GM12878 (cell line): ENCODE measurements at regions of chrX and their contacts with region 1.

Region 1: DNA sequence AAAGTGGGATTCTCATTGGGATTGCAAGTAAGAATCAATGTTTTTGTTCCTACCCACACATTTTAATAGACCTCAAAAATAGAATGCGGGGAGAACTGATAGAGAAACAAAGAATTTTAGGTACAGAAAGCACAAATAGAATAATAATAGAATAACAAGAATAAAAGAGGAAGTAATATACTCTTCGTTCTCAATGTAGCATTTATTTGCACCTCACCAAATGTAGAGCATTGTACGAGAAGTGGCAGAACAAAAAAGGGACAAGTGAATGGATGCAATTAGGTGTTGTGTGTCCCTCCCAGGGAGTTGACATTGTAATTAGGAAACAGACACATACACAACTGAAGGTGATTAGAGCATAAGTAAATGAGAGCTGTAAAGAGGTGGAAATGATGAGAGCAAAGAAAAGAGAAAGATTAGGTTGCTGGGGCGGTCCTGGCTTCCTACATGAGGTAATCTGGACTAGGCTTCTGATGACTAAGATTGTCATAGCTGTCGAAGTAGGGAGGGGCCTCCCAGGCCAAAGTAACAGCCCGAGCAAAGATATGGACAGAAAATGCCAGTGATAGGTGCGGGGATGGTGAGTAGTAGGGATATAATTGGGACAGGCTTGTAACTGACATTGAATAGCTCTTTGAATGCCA is 10.4 kb downstream of the RAB9A start:
- DNase-seq: no peak
- ATAC-seq: peak; percentile 53
- H3K4me3 ChIP-seq: peak overlapping the region; percentile 37; the same call in 1 of the 2 replicates
- H3K27ac ChIP-seq: peak overlapping the region; percentile 69
- H3K4me1 ChIP-seq: peaks cover 38% of the 10 kb centered on the region
- H3K27me3 ChIP-seq: no peaks in the 10 kb centered on the region
- CTCF ChIP-seq: no peak
- EP300 ChIP-seq: no peak
- POLR2A ChIP-seq: no peak
- RAD21 ChIP-seq: no peak

Region 2: GRCh38 chrX:13658602-13659001 is 40.7 kb before region 1 on chrX:
- CTCF ChIA-PET with region 1: interaction called, 21 read pairs
- POLR2A ChIA-PET with region 1: interaction called, 9 read pairs
- RAD21 ChIA-PET with region 1: interaction called, 25 read pairs
- SMC1A ChIA-PET with region 1: interaction called, 115 read pairs
- in situ Hi-C with region 1: no loop called
- intact Hi-C with region 1: no loop called
- DNase-seq: no peak
- ATAC-seq: peak; percentile 66
- H3K4me3 ChIP-seq: no peak overlapping the region
- H3K27ac ChIP-seq: peak overlapping the region; percentile 73
- H3K4me1 ChIP-seq: peaks cover 14% of the 10 kb centered on the region
- H3K27me3 ChIP-seq: no peaks in the 10 kb centered on the region
- CTCF ChIP-seq: peak; percentile 59 to 72 (median 68)
- EP300 ChIP-seq: no peak
- POLR2A ChIP-seq: no peak
- RAD21 ChIP-seq: peak; percentile 93

Region 3: DNA sequence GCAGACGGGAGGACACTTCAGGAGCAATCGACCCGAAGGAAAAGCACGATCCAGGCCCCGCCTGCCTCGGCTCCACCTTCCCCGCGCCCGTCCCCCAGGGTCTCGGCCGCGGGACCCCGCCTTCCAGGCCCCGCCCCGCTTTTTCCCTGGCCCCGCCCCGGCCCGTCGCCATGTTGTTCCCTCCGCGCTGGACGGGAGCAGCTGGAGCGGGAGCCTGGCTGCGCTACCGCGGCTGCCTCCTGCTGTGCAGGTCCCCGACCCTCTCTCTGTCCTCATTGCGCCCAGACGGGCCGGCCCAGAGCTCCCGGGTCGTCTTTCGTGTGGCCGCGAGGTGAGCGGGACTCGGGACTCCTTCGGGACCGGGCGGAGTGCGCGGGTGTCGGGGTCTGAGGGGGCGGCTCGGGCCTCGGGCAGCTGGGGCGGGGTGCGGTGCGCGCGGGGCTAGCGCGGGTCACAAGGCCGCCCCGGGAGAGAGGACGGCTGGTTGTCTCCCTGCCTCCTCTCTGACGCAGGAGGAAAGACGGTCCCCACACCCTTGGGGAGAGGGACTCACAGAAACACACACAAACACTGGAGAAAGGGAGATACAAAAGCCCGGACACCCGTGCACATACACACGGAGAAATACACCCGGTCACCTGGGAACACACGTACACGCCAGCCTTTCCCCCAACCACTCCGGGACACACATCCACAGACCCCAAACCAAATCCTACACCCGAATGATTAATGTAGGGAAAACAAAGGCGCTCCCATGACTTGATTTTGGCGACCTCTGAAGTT is 10.2 kb before region 1 on chrX and contains the start of gene RAB9A:
- CTCF ChIA-PET with region 1: interaction called, 15 read pairs
- POLR2A ChIA-PET with region 1: interaction called, 45 read pairs
- RAD21 ChIA-PET with region 1: interaction called, 42 read pairs
- SMC1A ChIA-PET with region 1: interaction called, 72 read pairs
- in situ Hi-C with region 1: no loop called
- intact Hi-C with region 1: no loop called
- DNase-seq: no peak
- ATAC-seq: peak; percentile 77
- H3K4me3 ChIP-seq: peak within 1 kb of the TSS; percentile 84
- H3K27ac ChIP-seq: peak within 1 kb of the TSS; percentile 91
- H3K4me1 ChIP-seq: peaks cover 16% of the 10 kb centered on the region
- H3K27me3 ChIP-seq: no peaks in the 10 kb centered on the region
- CTCF ChIP-seq: no peak
- EP300 ChIP-seq: peak in 1 of 2 experiments; percentile 18; a peak in 1 of 4 replicates
- POLR2A ChIP-seq: peak; percentile 86
- RAD21 ChIP-seq: no peak
- polyA plus RNA-seq, gene RAB9A: 49.2 to 49.3 TPM

Region 4: DNA sequence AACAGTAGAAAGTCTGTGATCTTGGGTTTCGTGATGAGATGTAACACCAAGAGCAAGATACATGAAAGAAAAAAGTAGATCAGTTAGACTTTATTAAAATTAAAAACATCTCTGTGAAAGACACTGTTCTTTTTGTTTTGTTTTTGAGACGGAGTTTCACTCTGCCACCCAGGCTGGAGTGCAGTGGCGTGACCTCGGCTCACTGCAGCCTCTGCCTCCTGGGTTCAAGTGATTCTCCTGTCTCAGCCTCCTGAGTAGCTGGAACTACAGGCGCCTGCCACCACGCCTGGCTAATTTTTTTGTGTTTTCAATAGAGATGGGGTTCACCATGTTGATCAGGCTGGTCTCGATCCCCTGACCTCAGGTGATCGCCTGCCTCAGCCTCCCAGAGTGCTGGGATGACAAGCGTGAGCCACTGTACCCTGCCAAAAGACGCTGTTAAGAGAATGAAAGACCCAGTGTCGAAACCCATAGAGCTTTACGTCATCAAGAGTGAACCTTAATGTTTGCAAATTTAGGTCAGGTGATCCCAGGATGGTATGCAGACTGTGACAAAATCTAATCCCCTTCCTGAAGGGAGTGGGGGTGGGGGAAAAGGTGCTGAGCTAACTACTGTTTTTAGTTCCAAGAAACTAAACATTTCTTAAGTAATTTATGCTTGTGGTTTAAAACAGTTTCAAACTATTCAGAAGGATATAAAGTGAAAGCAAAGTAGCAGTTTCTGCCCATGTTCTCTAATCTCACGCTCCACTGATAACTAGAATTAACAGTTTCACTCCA is 43.3 kb after region 1 on chrX:
- CTCF ChIA-PET with region 1: interaction called, 89 read pairs
- POLR2A ChIA-PET with region 1: interaction called, 130 read pairs
- RAD21 ChIA-PET with region 1: interaction called, 201 read pairs
- SMC1A ChIA-PET with region 1: interaction called, 198 read pairs
- in situ Hi-C with region 1: no loop called
- intact Hi-C with region 1: loop called (anchors 2 kb)
- DNase-seq: peak; percentile 91
- ATAC-seq: peak; percentile 92
- H3K4me3 ChIP-seq: peak overlapping the region; percentile 19; the same call in 1 of the 2 replicates
- H3K27ac ChIP-seq: peak overlapping the region; percentile 62; the same call in 1 of the 2 replicates
- H3K4me1 ChIP-seq: peaks cover 23% of the 10 kb centered on the region
- H3K27me3 ChIP-seq: no peaks in the 10 kb centered on the region
- CTCF ChIP-seq: no peak
- EP300 ChIP-seq: peak; percentile 65 to 74
- POLR2A ChIP-seq: no peak
- RAD21 ChIP-seq: no peak

Region 5: GRCh38 chrX:13798184-13798583 is 98.9 kb after region 1 on chrX:
- CTCF ChIA-PET with region 1: no interaction called
- POLR2A ChIA-PET with region 1: no interaction called
- RAD21 ChIA-PET with region 1: no interaction called
- SMC1A ChIA-PET with region 1: no interaction called
- in situ Hi-C with region 1: no loop called
- intact Hi-C with region 1: no loop called
- DNase-seq: no peak
- ATAC-seq: no peak
- H3K4me3 ChIP-seq: no peak overlapping the region
- H3K27ac ChIP-seq: no peak overlapping the region
- H3K4me1 ChIP-seq: no peaks in the 10 kb centered on the region; the same call in 1 of the 2 replicates
- H3K27me3 ChIP-seq: no peaks in the 10 kb centered on the region
- CTCF ChIP-seq: no peak
- EP300 ChIP-seq: no peak
- POLR2A ChIP-seq: no peak
- RAD21 ChIP-seq: no peak

Region 6: DNA sequence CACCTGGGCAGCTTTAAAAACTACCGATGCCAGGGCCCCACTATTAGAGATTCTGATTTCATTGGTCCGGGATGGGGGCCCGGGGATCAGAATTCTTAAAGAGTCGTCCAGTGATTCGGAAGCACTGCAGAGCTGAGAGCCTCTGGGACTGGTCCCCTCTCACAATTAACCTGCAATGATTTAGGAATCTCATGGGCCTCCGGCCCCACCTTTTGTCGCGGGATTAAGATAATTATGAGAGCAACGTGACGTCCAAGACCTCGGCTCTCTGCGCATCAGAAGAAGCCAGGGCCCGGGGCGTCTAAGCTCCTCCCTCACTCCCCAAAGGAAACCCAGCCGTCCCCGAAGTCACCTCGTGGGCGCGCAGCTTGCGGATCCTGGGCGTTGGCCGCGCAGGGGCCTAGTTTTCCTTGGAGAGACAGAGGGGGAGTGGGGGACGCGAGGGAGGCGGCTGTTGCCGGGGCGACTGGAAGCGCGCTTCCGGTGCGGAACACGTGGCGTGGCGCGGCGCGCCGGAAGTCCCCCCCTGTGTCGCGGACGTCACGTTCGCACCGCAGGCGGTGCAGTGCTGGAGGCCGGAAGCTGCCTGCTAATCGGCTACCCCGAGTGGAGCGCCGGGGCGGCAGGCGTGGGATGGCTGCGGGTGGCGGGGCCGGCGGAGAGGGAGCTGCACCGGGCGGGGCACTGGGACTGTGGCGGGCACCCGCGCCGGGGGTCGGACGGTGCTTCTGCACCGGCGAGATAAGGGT is 330.3 kb after region 1 on chrX and contains the start of gene GEMIN8:
- CTCF ChIA-PET with region 1: interaction called, 3 read pairs
- POLR2A ChIA-PET with region 1: interaction called, 7 read pairs
- RAD21 ChIA-PET with region 1: interaction called, 22 read pairs
- SMC1A ChIA-PET with region 1: interaction called, 3 read pairs
- in situ Hi-C with region 1: no loop called
- intact Hi-C with region 1: no loop called
- DNase-seq: peak; percentile 46
- ATAC-seq: peak; percentile 84
- H3K4me3 ChIP-seq: peak within 1 kb of the TSS; percentile 81
- H3K27ac ChIP-seq: peak within 1 kb of the TSS; percentile 77
- H3K4me1 ChIP-seq: peaks cover 6% of the 10 kb centered on the region
- H3K27me3 ChIP-seq: no peaks in the 10 kb centered on the region
- CTCF ChIP-seq: no peak
- EP300 ChIP-seq: 0 out of 4 replicates have a peak, but pooled peaks of 1 of the 2 experiments have one; percentile 4
- POLR2A ChIP-seq: peak; percentile 91
- RAD21 ChIP-seq: no peak
- polyA plus RNA-seq, gene GEMIN8: 18.4 to 29.5 TPM